CD4-positive, alpha-beta T cell (primary cell): ENCODE measurements at regions of chr17 and their contacts with region 1.

Region 1: DNA sequence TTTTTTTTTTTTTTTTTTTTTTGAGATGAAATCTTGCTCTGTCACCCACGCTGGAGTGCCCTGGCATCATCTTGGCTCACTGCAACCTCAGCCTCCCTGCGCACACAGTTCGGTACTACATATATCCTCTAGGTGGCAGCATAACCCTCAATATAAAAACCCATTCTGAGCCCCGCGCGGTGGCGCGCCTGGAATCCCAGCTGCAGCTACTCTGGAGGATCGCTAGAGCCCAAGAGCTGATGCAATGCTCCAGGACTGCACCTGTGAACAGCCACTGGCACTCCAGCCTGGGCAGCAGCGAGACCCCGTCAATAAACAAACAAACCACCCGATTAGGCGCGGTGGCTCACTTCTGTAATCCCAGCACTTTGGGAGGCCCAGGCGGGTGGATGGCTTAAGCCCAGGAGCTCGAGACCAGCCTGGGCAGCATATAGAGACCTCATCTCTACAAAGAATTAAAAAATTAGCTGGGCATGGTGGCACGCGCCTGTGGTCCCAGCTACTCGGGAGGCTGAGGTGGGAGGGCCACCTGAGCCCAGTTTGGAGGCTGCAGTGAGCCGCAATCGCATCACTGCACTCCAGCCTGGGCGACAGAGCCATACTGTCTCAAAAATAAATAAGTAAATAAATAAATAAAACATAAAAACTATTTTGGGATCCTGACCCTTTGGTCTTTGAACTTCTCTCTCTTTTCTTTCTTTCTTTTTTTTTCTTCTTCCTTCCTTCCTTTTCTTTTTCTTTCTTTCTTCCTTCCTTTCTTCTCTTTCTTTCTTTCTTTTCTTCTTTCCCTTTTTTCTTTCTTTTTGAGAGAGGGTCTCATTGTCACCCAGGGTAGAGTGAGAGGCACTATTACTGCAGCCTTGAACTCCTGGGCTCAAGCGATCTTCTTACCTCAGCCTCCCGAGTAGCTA is 15.4 kb upstream of the AKAP10 start:
- DNase-seq: peak; percentile 56 to 89 (median 69)
- ATAC-seq: peak; percentile 100
- H3K4me3 ChIP-seq: no peak overlapping the region
- H3K4me3 Mint-ChIP-seq: peak overlapping the region; percentile 30
- H3K27ac ChIP-seq: no peak overlapping the region
- H3K27ac Mint-ChIP-seq: no peak overlapping the region
- H3K4me1 ChIP-seq: peaks cover 8% of the 10 kb centered on the region
- H3K4me1 Mint-ChIP-seq: peaks cover 6% of the 10 kb centered on the region
- H3K27me3 ChIP-seq: no peaks in the 10 kb centered on the region
- H3K27me3 Mint-ChIP-seq: peaks cover 14% of the 10 kb centered on the region
- CTCF ChIP-seq: peak; percentile 82

Region 2: DNA sequence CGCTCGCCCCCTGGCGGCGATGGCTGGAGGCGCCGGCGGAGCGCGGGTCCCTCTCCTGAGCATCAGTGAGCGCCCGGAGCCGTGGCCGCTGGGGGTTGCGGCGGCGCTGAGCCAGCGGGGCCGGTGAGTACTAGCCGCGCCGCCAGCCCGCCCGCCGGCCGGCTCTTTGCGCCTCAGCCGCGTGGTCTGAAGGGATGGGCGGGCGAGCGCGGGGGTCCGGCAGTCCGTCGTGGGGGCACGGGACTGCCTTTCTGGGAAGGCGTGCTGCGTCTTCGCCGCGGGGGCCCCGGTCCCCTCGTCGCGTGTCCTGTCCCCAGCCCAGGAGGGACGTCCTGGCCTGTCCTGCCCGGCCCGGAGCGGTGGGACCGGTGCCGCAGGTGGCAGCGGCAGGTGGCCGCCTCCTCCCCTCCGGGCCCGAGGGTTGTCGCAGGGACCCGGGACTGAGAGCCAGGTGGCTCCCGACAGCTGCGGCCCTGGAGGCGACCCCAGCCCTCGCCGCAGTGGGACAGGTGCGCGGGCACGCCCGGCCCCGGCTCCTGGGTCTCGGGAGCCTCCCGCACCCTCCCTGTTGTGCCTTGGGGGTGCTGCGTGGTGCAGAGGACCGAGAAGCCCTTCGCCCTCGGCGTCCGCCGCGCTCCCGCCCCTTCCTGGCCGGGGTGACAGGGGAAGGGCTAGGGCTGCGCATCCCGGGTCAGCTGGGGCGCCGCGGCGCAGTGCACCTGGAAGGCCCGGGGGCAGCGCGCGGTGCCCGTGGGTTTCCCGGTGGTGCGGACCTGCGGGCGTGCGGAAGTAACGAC is 16.4 kb after region 1 on chr17 and contains the start of gene SPECC1:
- CTCF ChIA-PET with region 1: interaction called, 13 read pairs
- POLR2A ChIA-PET with region 1: interaction called, 4 read pairs
- intact Hi-C with region 1: no loop called
- DNase-seq: peak; percentile 62 to 91 (median 84)
- ATAC-seq: peak; percentile 98
- H3K4me3 ChIP-seq: peak within 1 kb of the TSS; percentile 78
- H3K4me3 Mint-ChIP-seq: peak within 1 kb of the TSS; percentile 93
- H3K27ac ChIP-seq: no peak within 1 kb of the TSS
- H3K27ac Mint-ChIP-seq: no peak within 1 kb of the TSS
- H3K4me1 ChIP-seq: peaks cover 18% of the 10 kb centered on the region
- H3K4me1 Mint-ChIP-seq: peaks cover 20% of the 10 kb centered on the region
- H3K27me3 ChIP-seq: peaks cover 7 to 44% of the 10 kb centered on the region in 2 experiments
- H3K27me3 Mint-ChIP-seq: peaks cover 70% of the 10 kb centered on the region
- CTCF ChIP-seq: peak; percentile 96
- total RNA-seq, gene SPECC1: 4.3 to 4.4 TPM

Region 3: GRCh38 chr17:20043021-20043420 is 50.0 kb after region 1 on chr17:
- CTCF ChIA-PET with region 1: no interaction called
- POLR2A ChIA-PET with region 1: no interaction called
- intact Hi-C with region 1: no loop called
- DNase-seq: peak in 3 of 14 experiments; percentile 5 to 45 (median 9)
- ATAC-seq: no peak
- H3K4me3 ChIP-seq: no peak overlapping the region
- H3K4me3 Mint-ChIP-seq: no peak overlapping the region
- H3K27ac ChIP-seq: no peak overlapping the region
- H3K27ac Mint-ChIP-seq: no peak overlapping the region
- H3K4me1 ChIP-seq: peaks cover 8% of the 10 kb centered on the region
- H3K4me1 Mint-ChIP-seq: no peaks in the 10 kb centered on the region
- H3K27me3 ChIP-seq: no peaks in the 10 kb centered on the region
- H3K27me3 Mint-ChIP-seq: peaks cover 8% of the 10 kb centered on the region
- CTCF ChIP-seq: no peak

Region 4: GRCh38 chr17:20226814-20227482 is 233.9 kb after region 1 on chr17:
- CTCF ChIA-PET with region 1: no interaction called
- POLR2A ChIA-PET with region 1: no interaction called
- intact Hi-C with region 1: loop called (anchors 2 to 5 kb)
- DNase-seq: peak; percentile 66 to 88 (median 74)
- ATAC-seq: peak; percentile 100
- H3K4me3 ChIP-seq: no peak overlapping the region
- H3K4me3 Mint-ChIP-seq: no peak overlapping the region
- H3K27ac ChIP-seq: no peak overlapping the region
- H3K27ac Mint-ChIP-seq: no peak overlapping the region
- H3K4me1 ChIP-seq: peaks cover 6% of the 10 kb centered on the region
- H3K4me1 Mint-ChIP-seq: peaks cover 26% of the 10 kb centered on the region
- H3K27me3 ChIP-seq: no peaks in the 10 kb centered on the region
- H3K27me3 Mint-ChIP-seq: no peaks in the 10 kb centered on the region
- CTCF ChIP-seq: peak; percentile 89

Region 5: GRCh38 chr17:20315821-20316220 is 322.8 kb after region 1 on chr17:
- CTCF ChIA-PET with region 1: no interaction called
- POLR2A ChIA-PET with region 1: no interaction called
- intact Hi-C with region 1: loop called (anchors 5 to 10 kb)
- DNase-seq: no peak
- ATAC-seq: no peak
- H3K4me3 ChIP-seq: no peak overlapping the region
- H3K4me3 Mint-ChIP-seq: no peak overlapping the region
- H3K27ac ChIP-seq: no peak overlapping the region
- H3K27ac Mint-ChIP-seq: no peak overlapping the region
- H3K4me1 ChIP-seq: peaks cover 6% of the 10 kb centered on the region
- H3K4me1 Mint-ChIP-seq: no peaks in the 10 kb centered on the region
- H3K27me3 ChIP-seq: no peaks in the 10 kb centered on the region
- H3K27me3 Mint-ChIP-seq: no peaks in the 10 kb centered on the region
- CTCF ChIP-seq: no peak

Region 6: DNA sequence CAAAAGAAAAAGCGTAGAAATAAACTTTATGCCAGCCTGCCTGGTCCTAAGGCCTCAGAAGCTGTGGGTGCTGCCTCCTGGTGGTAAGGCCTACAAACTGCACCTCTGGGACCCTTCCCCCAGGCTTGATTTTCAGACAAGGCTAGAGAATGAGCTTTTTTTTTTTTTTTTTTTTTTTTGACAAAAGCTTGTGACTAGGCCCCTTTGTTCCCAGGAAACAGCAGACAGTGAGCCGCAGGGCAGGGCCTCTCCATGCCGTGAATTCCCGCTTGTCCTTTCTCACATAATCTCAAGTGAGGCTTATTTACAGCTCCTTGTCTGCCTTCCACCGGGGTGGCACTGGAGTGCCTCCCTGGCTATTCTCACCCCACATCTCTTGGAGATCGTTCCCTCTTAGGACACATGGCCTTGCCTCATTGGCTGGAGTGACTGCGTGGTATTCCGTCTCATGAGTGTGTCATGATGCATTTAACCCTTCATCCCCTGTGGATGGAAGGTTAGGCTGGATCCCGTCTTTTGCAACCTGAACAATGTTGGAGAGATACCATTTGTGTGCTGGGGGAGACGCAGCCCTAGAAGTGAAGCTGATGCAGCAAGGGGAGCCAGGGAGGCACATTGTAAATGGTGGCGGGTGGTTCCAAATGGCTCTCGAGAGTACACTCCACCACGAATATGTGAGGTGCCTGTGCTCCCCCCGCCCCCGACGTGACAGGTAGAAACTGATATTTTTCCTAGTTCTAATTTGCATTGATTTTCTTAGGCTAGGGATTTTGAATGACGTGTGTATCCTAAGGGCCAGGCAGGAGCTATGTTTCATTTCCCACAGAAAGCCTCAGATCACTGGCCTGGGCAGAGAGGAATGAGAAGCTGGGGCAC is 1000.2 kb after region 1 on chr17:
- CTCF ChIA-PET with region 1: interaction called, 5 read pairs
- POLR2A ChIA-PET with region 1: no interaction called
- intact Hi-C with region 1: loop called in 1 of 2 experiments (anchors 5 kb)
- DNase-seq: peak; percentile 30 to 82 (median 58)
- ATAC-seq: peak; percentile 97
- H3K4me3 ChIP-seq: no peak overlapping the region
- H3K4me3 Mint-ChIP-seq: no peak overlapping the region
- H3K27ac ChIP-seq: no peak overlapping the region
- H3K27ac Mint-ChIP-seq: peak overlapping the region; percentile 2
- H3K4me1 ChIP-seq: peaks cover 6% of the 10 kb centered on the region
- H3K4me1 Mint-ChIP-seq: no peaks in the 10 kb centered on the region
- H3K27me3 ChIP-seq: no peaks in the 10 kb centered on the region
- H3K27me3 Mint-ChIP-seq: no peaks in the 10 kb centered on the region
- CTCF ChIP-seq: peak; percentile 86